ENCODE measurements at regions of chr2 and their contacts with region 1.

Region 1: GRCh38 chr2:177724398-177725287 is 332.1 kb downstream of the AGPS start:
- DNase-seq: peak; percentile 76 to 81 (median 79)
- ATAC-seq: peak; percentile 76
- H3K4me3 ChIP-seq: no peak overlapping the region
- H3K27ac ChIP-seq: no peak overlapping the region
- H3K4me1 ChIP-seq: peaks cover 0 to 29% of the 10 kb centered on the region in 2 experiments; a peak in 4 of 5 replicates
- H3K27me3 ChIP-seq: no peaks in the 10 kb centered on the region
- CTCF ChIP-seq: peak; percentile 87 to 96 (median 96)
- EP300 ChIP-seq: no peak
- POLR2A ChIP-seq: no peak
- RAD21 ChIP-seq: peak; percentile 92 to 98

Region 2: DNA sequence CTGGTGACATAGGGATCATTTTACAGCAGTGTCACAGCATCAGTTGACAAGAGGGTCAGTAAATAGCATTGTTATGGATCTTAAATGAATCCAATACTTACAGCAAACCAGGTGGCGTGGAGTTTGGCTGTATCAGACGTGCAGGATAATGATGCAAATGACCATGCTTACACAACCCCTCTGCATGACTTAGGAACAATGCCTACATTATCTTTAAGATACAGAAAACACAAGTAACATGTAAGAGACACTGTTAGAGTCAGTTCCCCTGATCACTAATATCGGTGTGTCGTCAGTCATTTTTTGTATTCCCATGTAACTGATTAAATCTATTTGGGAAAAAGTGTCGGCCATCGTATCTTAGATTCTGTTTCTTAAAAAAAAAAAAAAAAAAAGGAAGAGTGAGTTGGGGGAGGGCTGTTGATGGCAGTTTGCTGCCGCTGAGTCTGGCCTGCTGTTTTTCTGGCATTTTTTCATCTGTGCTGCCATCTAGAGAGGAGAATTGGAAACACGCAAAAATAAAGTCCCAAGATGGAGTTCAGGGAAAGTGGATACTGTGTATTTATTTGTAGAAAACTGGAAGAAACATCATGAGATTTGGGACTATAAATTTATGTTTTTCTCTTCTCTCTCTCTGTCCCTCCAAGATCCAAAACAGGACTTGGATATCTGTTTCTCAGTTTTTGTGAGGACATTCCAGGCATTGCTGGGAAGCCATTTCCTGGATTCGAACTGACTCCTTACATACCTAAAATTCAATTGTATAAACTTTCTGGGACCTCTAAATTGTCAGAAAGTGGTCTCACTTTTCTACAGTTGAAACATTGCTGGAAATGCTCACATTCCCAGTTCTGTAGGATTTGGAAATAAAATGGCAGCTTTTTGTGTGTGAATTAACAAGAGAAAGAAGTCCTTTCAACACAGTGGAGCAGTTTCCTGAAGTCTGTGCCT is 392.3 kb before region 1 on chr2:
- CTCF ChIA-PET with region 1: interaction called, 15 read pairs
- POLR2A ChIA-PET with region 1: interaction called, 3 read pairs
- in situ Hi-C with region 1: loop called (anchors 10 kb)
- intact Hi-C with region 1: loop called (anchors 1 kb)
- DNase-seq: peak; percentile 61 to 84 (median 66)
- ATAC-seq: peak; percentile 83
- H3K4me3 ChIP-seq: no peak overlapping the region
- H3K27ac ChIP-seq: peak overlapping the region; percentile 43; the same call in 2 of the 3 replicates
- H3K4me1 ChIP-seq: peaks cover 0 to 21% of the 10 kb centered on the region in 2 experiments; a peak in 4 of 5 replicates
- H3K27me3 ChIP-seq: no peaks in the 10 kb centered on the region
- CTCF ChIP-seq: peak; percentile 78 to 95 (median 81)
- EP300 ChIP-seq: peak; percentile 60
- POLR2A ChIP-seq: no peak
- RAD21 ChIP-seq: peak; percentile 92

Region 3: GRCh38 chr2:177489719-177490301 is 234.8 kb before region 1 on chr2:
- CTCF ChIA-PET with region 1: interaction called, 30 read pairs
- POLR2A ChIA-PET with region 1: no interaction called
- in situ Hi-C with region 1: loop called (anchors 10 kb)
- intact Hi-C with region 1: loop called (anchors 1 kb)
- DNase-seq: peak in 3 of 4 experiments; percentile 19 to 35 (median 21)
- ATAC-seq: peak; percentile 70
- H3K4me3 ChIP-seq: no peak overlapping the region
- H3K27ac ChIP-seq: no peak overlapping the region
- H3K4me1 ChIP-seq: no peaks in the 10 kb centered on the region
- H3K27me3 ChIP-seq: no peaks in the 10 kb centered on the region
- CTCF ChIP-seq: peak; percentile 36 to 83 (median 50); a peak in 5 of 6 replicates
- EP300 ChIP-seq: no peak
- POLR2A ChIP-seq: no peak
- RAD21 ChIP-seq: peak; percentile 74 to 84

Region 4: GRCh38 chr2:177636672-177637071 is 88.0 kb before region 1 on chr2:
- CTCF ChIA-PET with region 1: no interaction called
- POLR2A ChIA-PET with region 1: interaction called, 3 read pairs
- in situ Hi-C with region 1: no loop called
- intact Hi-C with region 1: loop called (anchors 1 kb)
- DNase-seq: peak in 1 of 4 experiments; percentile 52
- ATAC-seq: peak; percentile 41
- H3K4me3 ChIP-seq: no peak overlapping the region
- H3K27ac ChIP-seq: no peak overlapping the region
- H3K4me1 ChIP-seq: peaks cover 0 to 22% of the 10 kb centered on the region in 2 experiments; a peak in 3 of 5 replicates
- H3K27me3 ChIP-seq: no peaks in the 10 kb centered on the region; a peak in 1 of 5 replicates
- CTCF ChIP-seq: peak; percentile 43 to 69 (median 46); a peak in 5 of 6 replicates
- EP300 ChIP-seq: no peak
- POLR2A ChIP-seq: no peak
- RAD21 ChIP-seq: peak; percentile 80 to 85

Region 5: GRCh38 chr2:177753682-177754491 is 29.2 kb after region 1 on chr2:
- CTCF ChIA-PET with region 1: interaction called, 4 read pairs
- POLR2A ChIA-PET with region 1: interaction called, 4 read pairs
- in situ Hi-C with region 1: no loop called
- intact Hi-C with region 1: loop called (anchors 1 kb)
- DNase-seq: peak; percentile 54 to 87 (median 66)
- ATAC-seq: peak; percentile 92
- H3K4me3 ChIP-seq: no peak overlapping the region
- H3K27ac ChIP-seq: peak overlapping the region; percentile 36; the same call in 1 of the 3 replicates
- H3K4me1 ChIP-seq: peaks cover 11 to 37% of the 10 kb centered on the region in 2 experiments
- H3K27me3 ChIP-seq: no peaks in the 10 kb centered on the region
- CTCF ChIP-seq: peak in 1 of 3 experiments; percentile 24; a peak in 2 of 6 replicates
- EP300 ChIP-seq: peak; percentile 36
- POLR2A ChIP-seq: no peak
- RAD21 ChIP-seq: peak; percentile 4 to 38; a peak in 2 of 4 replicates